GM10248 (cell line): ENCODE measurements at regions of chr21 and their contacts with region 1.

Region 1: GRCh38 chr21:25907573-25908275 is 173.0 kb downstream of the GABPA start:
- DNase-seq: no peak
- CTCF ChIP-seq: no peak

Region 2: DNA sequence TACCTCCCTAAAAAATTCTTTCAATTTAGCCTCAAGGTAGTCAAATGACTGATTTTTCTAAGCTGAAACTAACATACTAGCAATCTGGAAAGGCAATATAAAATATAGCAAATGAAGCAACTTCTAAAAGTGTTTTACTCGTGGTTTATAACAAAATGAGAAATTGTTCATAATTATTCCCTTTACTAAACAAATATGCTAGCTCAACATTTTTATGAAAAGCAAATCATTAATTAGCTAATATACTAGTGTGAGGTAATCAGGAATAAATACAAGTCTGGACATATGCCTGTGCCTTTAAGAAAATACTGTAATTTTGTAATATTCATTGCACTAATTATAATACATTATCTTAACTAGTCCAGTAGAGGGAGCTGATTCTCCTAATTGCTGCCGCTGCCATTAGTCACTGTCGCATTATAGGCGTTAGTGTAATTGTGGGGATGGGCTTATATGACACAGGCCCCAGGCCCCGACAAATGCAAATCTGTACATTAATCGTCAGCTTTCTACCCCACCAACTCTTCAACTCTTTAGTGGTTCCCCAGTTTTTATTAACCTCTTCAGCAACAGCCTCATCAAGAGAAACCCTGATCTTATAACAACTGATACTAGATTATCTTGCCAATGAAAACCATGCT is 12.0 kb before region 1 on chr21:
- CTCF ChIA-PET with region 1: interaction called, 10 read pairs
- POLR2A ChIA-PET with region 1: no interaction called
- DNase-seq: no peak
- CTCF ChIP-seq: peak; percentile 53

Region 3: GRCh38 chr21:26041431-26042180 is 133.9 kb after region 1 on chr21:
- CTCF ChIA-PET with region 1: no interaction called
- POLR2A ChIA-PET with region 1: no interaction called
- DNase-seq: no peak
- CTCF ChIP-seq: no peak

Region 4: DNA sequence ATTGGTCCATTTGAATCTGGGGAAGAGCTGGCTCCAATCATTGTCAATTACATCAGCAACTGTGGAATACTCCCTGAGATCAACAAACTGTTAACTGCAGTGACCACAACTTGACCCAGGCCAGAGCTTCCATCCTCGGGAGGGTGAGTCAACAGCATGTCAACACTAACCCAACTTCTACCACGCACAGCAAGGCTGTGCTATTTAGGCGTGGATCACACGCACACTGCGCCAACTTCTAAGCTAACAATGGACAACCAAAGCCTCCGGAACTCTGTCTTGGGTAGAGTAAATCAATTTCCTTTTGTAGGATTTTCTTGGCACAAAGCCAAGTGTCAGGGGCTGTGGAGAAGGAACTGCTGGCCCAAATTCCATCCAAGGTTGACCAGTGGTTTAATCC is 232.5 kb after region 1 on chr21:
- CTCF ChIA-PET with region 1: no interaction called
- POLR2A ChIA-PET with region 1: no interaction called
- DNase-seq: no peak
- CTCF ChIP-seq: no peak